Natural killer cell (primary cell): ENCODE measurements at regions of chr7 and their contacts with region 1.

Region 1: DNA sequence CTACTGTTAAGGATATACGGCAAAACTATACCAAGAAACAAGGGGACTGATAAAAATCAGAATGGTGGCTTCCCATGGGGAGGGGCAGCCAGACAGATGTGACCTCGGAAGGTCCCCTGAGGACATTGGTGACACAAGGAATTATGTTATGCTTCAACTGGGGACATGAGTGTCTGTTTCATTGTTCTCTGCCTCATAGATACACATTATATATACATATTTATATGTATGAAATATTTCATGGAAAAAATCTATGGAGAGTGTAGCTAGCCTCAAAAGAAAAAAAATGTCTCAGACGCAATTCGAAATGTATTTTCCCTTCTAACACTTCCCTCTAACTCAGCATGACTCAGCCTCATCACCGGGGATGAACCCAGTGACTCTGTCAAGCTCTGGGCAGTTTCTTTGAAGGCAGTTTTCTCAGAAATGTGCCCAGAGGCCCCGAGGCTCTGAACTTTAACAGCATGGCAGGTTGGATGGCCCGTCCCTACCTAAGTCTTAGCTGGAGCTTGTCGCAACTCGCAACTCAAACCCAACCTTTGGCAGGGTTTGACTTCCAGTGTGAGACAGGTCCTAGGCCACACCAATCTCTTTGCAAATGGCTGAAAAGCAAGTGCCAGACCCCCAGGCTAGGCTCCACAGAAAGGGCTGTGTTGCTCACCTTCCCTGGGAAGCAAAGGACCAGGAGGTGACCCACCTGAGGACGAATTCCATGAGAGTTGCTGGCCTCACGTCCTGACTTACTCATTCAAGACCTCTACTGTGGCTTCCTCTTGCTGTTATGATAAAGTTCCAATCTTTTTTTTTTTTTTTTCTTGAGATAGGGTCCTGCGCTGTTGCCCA is 86.9 kb downstream of the CARD11 start:
- DNase-seq: peak; percentile 27 to 40
- ATAC-seq: peak; percentile 55 to 69 (median 60)
- H3K4me3 ChIP-seq: no peak overlapping the region
- H3K4me3 Mint-ChIP-seq: peak overlapping the region; percentile 25
- H3K27ac ChIP-seq: peak overlapping the region; percentile 15
- H3K27ac Mint-ChIP-seq: peak overlapping the region; percentile 85 to 91
- H3K4me1 ChIP-seq: peaks cover 72% of the 10 kb centered on the region
- H3K4me1 Mint-ChIP-seq: peaks cover 61 to 63% of the 10 kb centered on the region in 2 donors
- H3K27me3 ChIP-seq: no peaks in the 10 kb centered on the region
- H3K27me3 Mint-ChIP-seq: no peaks in the 10 kb centered on the region
- CTCF ChIP-seq: no peak

Region 2: GRCh38 chr7:2660585-2661408 is 295.9 kb before region 1 on chr7:
- intact Hi-C with region 1: no loop called
- DNase-seq: no peak
- ATAC-seq: no peak
- H3K4me3 ChIP-seq: no peak overlapping the region
- H3K4me3 Mint-ChIP-seq: no peak overlapping the region
- H3K27ac ChIP-seq: no peak overlapping the region
- H3K27ac Mint-ChIP-seq: no peak overlapping the region
- H3K4me1 ChIP-seq: no peaks in the 10 kb centered on the region
- H3K4me1 Mint-ChIP-seq: peaks cover 0 to 7% of the 10 kb centered on the region in 2 donors
- H3K27me3 ChIP-seq: no peaks in the 10 kb centered on the region
- H3K27me3 Mint-ChIP-seq: no peaks in the 10 kb centered on the region
- CTCF ChIP-seq: no peak

Region 3: GRCh38 chr7:3033581-3033980 is 76.8 kb after region 1 on chr7:
- intact Hi-C with region 1: loop called (anchors 5 kb)
- DNase-seq: no peak
- ATAC-seq: no peak
- H3K4me3 ChIP-seq: no peak overlapping the region
- H3K4me3 Mint-ChIP-seq: peak overlapping the region; percentile 6
- H3K27ac ChIP-seq: no peak overlapping the region
- H3K27ac Mint-ChIP-seq: peak overlapping the region; percentile 78 to 79
- H3K4me1 ChIP-seq: peaks cover 54% of the 10 kb centered on the region
- H3K4me1 Mint-ChIP-seq: peaks cover 49 to 75% of the 10 kb centered on the region in 2 donors
- H3K27me3 ChIP-seq: no peaks in the 10 kb centered on the region
- H3K27me3 Mint-ChIP-seq: no peaks in the 10 kb centered on the region
- CTCF ChIP-seq: no peak

Region 4: DNA sequence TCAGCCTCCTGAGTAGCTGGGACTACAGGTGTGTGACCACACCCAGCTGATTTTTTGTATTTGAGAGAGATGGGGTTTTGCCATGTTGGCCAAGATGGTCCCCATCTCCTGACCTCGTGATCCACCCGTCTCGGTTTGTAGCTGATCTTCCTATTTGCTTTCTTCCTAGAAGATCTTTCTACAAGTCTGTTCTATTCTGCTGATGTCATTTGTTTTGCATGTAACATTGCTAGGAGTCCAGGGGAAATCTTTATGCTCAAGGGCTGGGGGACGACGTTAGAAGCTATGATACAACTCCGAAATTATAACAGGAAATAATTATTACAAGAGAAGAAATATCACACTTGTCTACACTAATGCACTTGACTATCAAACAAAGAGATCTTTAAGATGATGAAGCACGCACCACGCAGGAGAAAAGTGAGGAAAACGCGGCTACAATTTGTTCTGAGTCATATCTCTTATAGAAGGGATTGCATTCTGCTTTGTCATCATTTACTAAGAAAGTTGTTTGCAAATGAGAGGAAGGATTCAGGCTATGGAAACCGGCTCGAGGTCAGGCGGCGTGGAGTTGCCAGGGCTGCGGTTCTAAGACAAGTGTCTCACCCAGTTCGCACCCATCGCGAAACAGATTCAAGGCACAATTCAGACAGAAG is 190.0 kb after region 1 on chr7:
- intact Hi-C with region 1: loop called (anchors 5 kb)
- DNase-seq: peak in 1 of 2 donors; percentile 37
- ATAC-seq: peak; percentile 67 to 86 (median 86)
- H3K4me3 ChIP-seq: no peak overlapping the region
- H3K4me3 Mint-ChIP-seq: peak overlapping the region; percentile 73
- H3K27ac ChIP-seq: no peak overlapping the region
- H3K27ac Mint-ChIP-seq: peak overlapping the region; percentile 65 to 68
- H3K4me1 ChIP-seq: peaks cover 26% of the 10 kb centered on the region
- H3K4me1 Mint-ChIP-seq: peaks cover 23 to 24% of the 10 kb centered on the region in 2 donors
- H3K27me3 ChIP-seq: no peaks in the 10 kb centered on the region
- H3K27me3 Mint-ChIP-seq: no peaks in the 10 kb centered on the region
- CTCF ChIP-seq: no peak

Region 5: GRCh38 chr7:3844540-3845148 is 887.9 kb after region 1 on chr7:
- intact Hi-C with region 1: no loop called
- DNase-seq: no peak
- ATAC-seq: no peak
- H3K4me3 ChIP-seq: no peak overlapping the region
- H3K4me3 Mint-ChIP-seq: no peak overlapping the region
- H3K27ac ChIP-seq: no peak overlapping the region
- H3K27ac Mint-ChIP-seq: no peak overlapping the region
- H3K4me1 ChIP-seq: no peaks in the 10 kb centered on the region
- H3K4me1 Mint-ChIP-seq: no peaks in the 10 kb centered on the region
- H3K27me3 ChIP-seq: no peaks in the 10 kb centered on the region
- H3K27me3 Mint-ChIP-seq: peaks cover 8 to 14% of the 10 kb centered on the region in 2 donors
- CTCF ChIP-seq: no peak